ENCODE measurements at regions of chr16 and their contacts with region 1.

Region 1: DNA sequence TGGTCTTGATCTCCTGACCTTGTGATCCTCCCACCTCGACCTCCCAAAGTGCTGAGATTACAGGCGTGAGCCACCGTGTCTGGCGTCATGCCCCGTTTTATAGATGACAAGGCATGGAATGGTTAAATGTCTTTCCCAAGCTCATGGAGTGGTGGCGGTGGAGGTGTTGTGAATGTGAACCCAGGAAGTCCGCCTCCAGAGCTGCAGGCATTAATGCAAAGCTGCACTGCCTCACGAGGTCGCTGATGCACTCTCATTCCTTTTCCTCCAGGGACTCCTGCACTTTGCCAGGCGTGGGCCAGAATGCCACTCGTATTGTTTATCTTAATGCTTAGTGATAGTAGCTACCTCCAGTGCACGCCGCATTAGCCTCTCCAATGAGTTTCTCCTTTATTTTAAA is 149.6 kb downstream of the WWOX start:
- DNase-seq: no peak
- ATAC-seq: peak; percentile 41 to 46
- H3K4me3 ChIP-seq: no peak overlapping the region
- H3K27ac ChIP-seq: no peak overlapping the region
- H3K4me1 ChIP-seq: no peaks in the 10 kb centered on the region
- H3K27me3 ChIP-seq: no peaks in the 10 kb centered on the region

Region 2: GRCh38 chr16:78437352-78437968 is 188.4 kb after region 1 on chr16:
- intact Hi-C with region 1: loop called in 1 of 4 experiments (anchors 10 kb)
- DNase-seq: peak in 1 of 3 donors; percentile 28
- ATAC-seq: no peak
- H3K4me3 ChIP-seq: no peak overlapping the region
- H3K27ac ChIP-seq: no peak overlapping the region
- H3K4me1 ChIP-seq: no peaks in the 10 kb centered on the region
- H3K27me3 ChIP-seq: no peaks in the 10 kb centered on the region